Left ventricle myocardium superior (tissue), 1 donor: ENCODE measurements at regions of chr4 and their contacts with region 1.

Region 1: DNA sequence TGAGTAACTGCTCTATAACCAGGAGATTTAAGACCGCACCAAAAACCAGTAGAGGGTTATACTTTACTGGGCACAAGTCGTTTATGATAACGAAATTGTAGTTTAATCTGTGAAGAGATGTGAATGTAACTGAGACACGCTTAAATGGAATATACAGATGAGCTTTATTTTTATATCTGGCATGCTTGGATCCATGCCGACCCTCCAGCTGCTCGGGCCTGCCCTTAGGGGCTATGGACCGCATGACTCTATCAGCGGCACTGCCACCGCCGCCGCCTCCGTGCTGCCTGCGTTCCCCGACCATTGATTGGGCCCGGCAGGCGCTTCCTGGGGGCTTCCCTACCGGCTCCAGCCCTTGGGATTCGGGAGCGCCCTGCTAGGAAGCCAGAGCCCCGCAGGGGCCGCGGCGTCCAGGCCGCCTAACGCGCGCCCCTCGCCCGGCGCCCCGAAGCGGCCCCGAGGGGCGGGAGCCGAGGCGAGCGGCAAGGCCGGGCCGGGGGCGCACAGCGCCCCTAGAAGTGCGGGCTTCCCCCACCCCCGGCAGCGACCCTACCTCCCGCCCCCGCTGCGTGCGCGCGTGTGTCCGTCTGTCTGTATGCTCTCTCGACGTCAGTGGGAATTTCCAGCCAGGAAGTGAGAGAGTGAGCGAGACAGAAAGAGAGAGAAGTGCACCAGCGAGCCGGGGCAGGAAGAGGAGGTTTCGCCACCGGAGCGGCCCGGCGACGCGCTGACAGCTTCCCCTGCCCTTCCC is at the start of gene NFKB1:
- DNase-seq: peak; percentile 83
- ATAC-seq: peak; percentile 67
- total RNA-seq, gene NFKB1: 19.0 TPM

Region 2: DNA sequence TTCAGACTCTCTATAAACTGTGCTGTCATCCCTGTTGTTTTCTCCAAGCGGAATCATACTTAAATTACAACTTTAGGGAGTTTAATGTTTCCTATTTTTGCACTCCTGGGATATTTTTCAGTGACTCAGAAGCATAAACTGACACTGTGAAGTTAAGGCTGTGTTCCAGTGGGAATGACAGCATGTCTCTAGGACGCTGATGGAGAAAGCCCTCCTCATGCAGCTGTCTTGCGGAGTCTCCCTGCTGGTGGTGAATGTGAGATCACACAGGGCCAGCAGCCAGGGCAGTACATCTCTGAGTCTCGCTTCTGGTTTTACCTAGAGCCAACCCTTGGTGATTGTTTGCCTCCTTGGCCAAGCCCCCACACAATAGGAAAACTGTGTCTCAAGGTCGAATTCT is 53.6 kb after region 1 on chr4:
- intact Hi-C with region 1: loop called (anchors 10 kb)
- DNase-seq: peak; percentile 74
- ATAC-seq: peak; percentile 97